Naive thymus-derived CD4-positive, alpha-beta T cell (primary cell): ENCODE measurements at regions of chr10 and their contacts with region 1.

Region 1: DNA sequence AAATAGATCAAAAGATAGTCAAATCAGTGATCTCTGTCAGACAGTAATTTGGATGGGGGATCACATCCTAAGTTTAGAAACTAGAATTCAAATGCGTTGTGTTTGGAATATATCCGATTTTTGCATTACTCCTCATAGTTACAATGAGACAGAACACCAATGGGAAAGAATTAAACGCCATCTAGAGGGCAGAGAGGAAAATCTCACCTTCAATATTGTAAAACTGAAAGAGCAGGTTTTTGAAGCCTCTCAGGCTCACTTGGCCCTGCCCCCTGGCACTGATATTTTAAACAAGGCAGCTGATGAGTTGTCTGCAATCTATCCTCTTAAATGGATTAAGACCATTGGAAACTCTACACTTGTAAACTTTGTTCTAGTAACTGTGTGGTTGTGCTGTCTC is 17.7 kb downstream of the FRG2B start:
- DNase-seq: peak in 5 of 9 donors; percentile 7 to 23 (median 17)
- ATAC-seq: no peak
- H3K4me3 ChIP-seq: no peak overlapping the region
- H3K4me3 Mint-ChIP-seq: no peak overlapping the region
- H3K27ac ChIP-seq: no peak overlapping the region
- H3K27ac Mint-ChIP-seq: no peak overlapping the region
- H3K4me1 ChIP-seq: no peaks in the 10 kb centered on the region
- H3K4me1 Mint-ChIP-seq: peaks cover 0 to 3% (median 0%) of the 10 kb centered on the region in 7 donors
- H3K27me3 ChIP-seq: no peaks in the 10 kb centered on the region
- H3K27me3 Mint-ChIP-seq: peaks cover 42 to 62% (median 56%) of the 10 kb centered on the region in 5 donors

Region 2: GRCh38 chr10:132892004-132892403 is 716.9 kb before region 1 on chr10:
- CTCF ChIA-PET with region 1: no interaction called
- POLR2A ChIA-PET with region 1: no interaction called
- intact Hi-C with region 1: no loop called
- DNase-seq: no peak
- ATAC-seq: no peak
- H3K4me3 ChIP-seq: no peak overlapping the region
- H3K4me3 Mint-ChIP-seq: no peak overlapping the region
- H3K27ac ChIP-seq: no peak overlapping the region
- H3K27ac Mint-ChIP-seq: no peak overlapping the region
- H3K4me1 ChIP-seq: no peaks in the 10 kb centered on the region
- H3K4me1 Mint-ChIP-seq: peaks cover 0 to 1% (median 0%) of the 10 kb centered on the region in 7 donors
- H3K27me3 ChIP-seq: no peaks in the 10 kb centered on the region
- H3K27me3 Mint-ChIP-seq: peaks cover 16 to 48% (median 37%) of the 10 kb centered on the region in 5 donors

Region 3: GRCh38 chr10:133400624-133401424 is 208.0 kb before region 1 on chr10:
- CTCF ChIA-PET with region 1: no interaction called
- POLR2A ChIA-PET with region 1: no interaction called
- intact Hi-C with region 1: no loop called
- DNase-seq: no peak
- ATAC-seq: peak; percentile 34
- H3K4me3 ChIP-seq: no peak overlapping the region
- H3K4me3 Mint-ChIP-seq: peak overlapping the region in 1 of 10 donors; percentile 61
- H3K27ac ChIP-seq: no peak overlapping the region
- H3K27ac Mint-ChIP-seq: peak overlapping the region in 6 of 9 donors; percentile 15 to 83 (median 37)
- H3K4me1 ChIP-seq: peaks cover 0 to under 1% of the 10 kb centered on the region in 2 donors
- H3K4me1 Mint-ChIP-seq: peaks cover 16 to 37% (median 34%) of the 10 kb centered on the region in 7 donors
- H3K27me3 ChIP-seq: no peaks in the 10 kb centered on the region
- H3K27me3 Mint-ChIP-seq: no peaks in the 10 kb centered on the region

Region 4: DNA sequence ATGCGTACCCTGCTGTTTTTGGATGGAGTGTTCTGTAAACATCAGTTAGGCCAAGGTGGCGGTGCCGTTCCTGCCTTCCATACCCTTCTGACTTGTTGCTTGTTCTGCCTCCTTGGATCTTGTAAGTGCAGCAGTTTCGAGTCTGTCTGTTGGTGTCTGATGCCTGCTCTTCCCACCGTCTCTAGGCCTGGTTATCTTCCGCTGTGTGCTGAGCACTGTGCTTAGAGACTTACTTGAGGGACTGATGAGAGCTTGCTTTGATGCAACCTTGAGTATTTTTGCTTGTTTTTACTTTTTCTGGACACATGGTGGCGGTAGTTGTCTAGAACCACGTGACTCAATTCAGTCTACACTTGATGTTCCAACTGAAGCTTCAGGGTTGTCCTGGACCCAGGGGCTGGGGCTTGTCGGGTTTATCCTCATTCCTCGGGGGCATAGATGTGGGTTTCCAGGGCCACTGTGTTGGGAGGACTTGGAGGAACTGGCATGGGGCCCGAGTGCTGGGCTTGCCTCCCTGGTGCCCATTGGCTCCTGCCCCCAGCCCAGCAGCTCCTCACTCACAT is 170.1 kb before region 1 on chr10:
- CTCF ChIA-PET with region 1: interaction called, 3 read pairs
- POLR2A ChIA-PET with region 1: no interaction called
- intact Hi-C with region 1: loop called in 1 of 2 experiments (anchors 5 kb)
- DNase-seq: peak in 1 of 9 donors; percentile 21
- ATAC-seq: peak; percentile 45
- H3K4me3 ChIP-seq: no peak overlapping the region
- H3K4me3 Mint-ChIP-seq: no peak overlapping the region
- H3K27ac ChIP-seq: no peak overlapping the region
- H3K27ac Mint-ChIP-seq: no peak overlapping the region
- H3K4me1 ChIP-seq: peaks cover 0 to 9% of the 10 kb centered on the region in 2 donors
- H3K4me1 Mint-ChIP-seq: peaks cover 0 to 26% (median 12%) of the 10 kb centered on the region in 7 donors
- H3K27me3 ChIP-seq: no peaks in the 10 kb centered on the region
- H3K27me3 Mint-ChIP-seq: peaks cover 4 to 21% (median 16%) of the 10 kb centered on the region in 5 donors

Region 5: DNA sequence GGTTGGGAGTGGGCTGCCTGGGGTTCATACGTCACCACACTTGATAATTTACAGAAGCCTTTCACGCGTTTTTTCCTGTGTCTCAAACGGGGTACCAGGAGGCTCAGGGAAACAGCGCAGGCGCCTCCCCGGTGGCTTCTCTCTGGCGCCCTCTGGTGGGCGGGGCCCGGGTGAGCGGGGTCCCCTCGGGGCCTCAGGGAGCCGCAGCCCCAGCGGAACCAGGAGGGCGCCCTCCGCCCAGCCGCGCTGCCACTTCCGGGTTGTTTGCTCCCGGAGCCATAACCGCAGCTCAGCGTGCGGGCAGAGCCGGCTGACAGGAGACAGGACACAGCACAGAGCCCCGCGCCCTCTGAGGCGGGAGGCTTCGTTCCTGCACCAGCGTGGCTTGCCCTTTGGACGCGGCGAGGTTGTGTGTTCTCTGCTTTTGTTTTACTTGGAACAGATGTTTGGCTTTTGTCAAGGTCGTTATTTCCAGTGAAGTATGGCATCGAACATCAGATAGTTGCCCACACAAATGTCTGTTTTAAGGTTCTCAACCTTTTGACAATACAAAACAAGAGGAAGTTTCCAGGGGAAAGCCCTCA is 88.6 kb before region 1 on chr10:
- CTCF ChIA-PET with region 1: no interaction called
- POLR2A ChIA-PET with region 1: no interaction called
- intact Hi-C with region 1: loop called in 1 of 2 experiments (anchors 1 kb)
- DNase-seq: peak; percentile 79 to 94 (median 87)
- ATAC-seq: peak; percentile 100
- H3K4me3 ChIP-seq: peak overlapping the region; percentile 61
- H3K4me3 Mint-ChIP-seq: peak overlapping the region; percentile 39 to 76 (median 64)
- H3K27ac ChIP-seq: peak overlapping the region; percentile 52
- H3K27ac Mint-ChIP-seq: peak overlapping the region in 5 of 9 donors; percentile 26 to 81 (median 48)
- H3K4me1 ChIP-seq: peaks cover 8 to 12% of the 10 kb centered on the region in 2 donors
- H3K4me1 Mint-ChIP-seq: peaks cover 0 to 21% (median 11%) of the 10 kb centered on the region in 7 donors
- H3K27me3 ChIP-seq: no peaks in the 10 kb centered on the region
- H3K27me3 Mint-ChIP-seq: peaks cover 0 to 43% (median 15%) of the 10 kb centered on the region in 5 donors

Region 6: DNA sequence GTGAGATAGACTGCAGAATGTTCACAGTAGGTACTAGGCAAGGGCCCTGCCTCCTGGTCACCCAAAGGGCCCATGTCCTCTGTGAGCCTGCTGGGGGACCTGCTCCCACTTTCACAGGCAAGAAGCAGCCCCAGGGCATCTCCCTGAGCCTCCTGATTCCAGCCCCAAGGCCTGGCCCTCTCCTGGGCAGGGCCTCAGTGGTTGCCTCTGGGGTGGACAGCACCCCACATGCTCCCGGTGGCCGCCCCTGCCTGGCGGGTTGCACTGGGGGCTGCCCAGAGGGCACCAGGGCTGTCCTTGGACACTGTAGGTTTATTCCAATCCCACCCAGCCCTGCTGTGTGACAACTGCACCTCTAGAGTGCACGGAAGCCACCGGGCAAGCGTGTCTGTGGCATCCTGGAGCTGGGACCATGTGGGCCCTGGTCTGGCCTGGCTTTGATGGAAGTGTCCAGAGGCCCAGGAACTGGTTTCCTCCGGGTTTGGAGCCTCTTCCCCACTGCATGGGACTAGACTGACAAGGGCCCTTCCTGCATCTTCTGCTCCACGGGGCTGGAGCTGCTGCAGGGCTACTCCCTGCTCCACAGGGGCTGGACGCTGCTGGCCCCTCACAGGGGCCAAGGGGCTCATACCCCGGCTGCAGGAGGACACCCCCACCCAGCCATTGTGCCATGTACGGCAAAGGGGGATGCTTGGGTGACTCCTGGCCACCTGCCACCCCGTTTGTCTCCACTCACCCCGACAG is 18.5 kb before region 1 on chr10:
- CTCF ChIA-PET with region 1: no interaction called
- POLR2A ChIA-PET with region 1: no interaction called
- intact Hi-C with region 1: no loop called
- DNase-seq: no peak
- ATAC-seq: no peak
- H3K4me3 ChIP-seq: no peak overlapping the region
- H3K4me3 Mint-ChIP-seq: no peak overlapping the region
- H3K27ac ChIP-seq: no peak overlapping the region
- H3K27ac Mint-ChIP-seq: no peak overlapping the region
- H3K4me1 ChIP-seq: no peaks in the 10 kb centered on the region
- H3K4me1 Mint-ChIP-seq: peaks cover 0 to 2% (median 0%) of the 10 kb centered on the region in 7 donors
- H3K27me3 ChIP-seq: no peaks in the 10 kb centered on the region
- H3K27me3 Mint-ChIP-seq: peaks cover 12 to 36% (median 24%) of the 10 kb centered on the region in 5 donors